ENCODE measurements at regions of chr12 and their contacts with region 1.

Region 1: DNA sequence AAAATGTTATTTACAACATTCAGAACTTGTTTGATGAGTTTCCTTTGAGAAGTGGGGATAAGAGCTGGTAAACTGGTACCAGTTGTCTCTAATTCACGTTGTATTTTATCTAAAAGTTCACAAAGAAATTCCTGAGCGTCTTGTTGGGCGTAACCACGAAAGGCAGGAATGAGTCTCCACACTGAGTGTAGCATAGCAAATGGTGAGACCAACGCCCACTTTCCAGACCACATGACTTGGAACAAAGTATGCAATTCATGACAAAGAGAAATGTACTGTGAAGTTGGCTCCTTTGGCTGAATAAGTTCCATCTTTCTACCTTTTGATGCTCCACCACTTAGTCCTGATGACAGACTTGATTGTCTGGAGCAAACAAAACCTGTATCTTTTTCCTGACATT is 18.4 kb downstream of the USP44 start:
- DNase-seq: no peak
- ATAC-seq: no peak
- H3K4me3 ChIP-seq: no peak overlapping the region
- H3K4me3 Mint-ChIP-seq: no peak overlapping the region
- H3K27ac ChIP-seq: no peak overlapping the region
- H3K27ac Mint-ChIP-seq: no peak overlapping the region
- H3K4me1 ChIP-seq: no peaks in the 10 kb centered on the region
- H3K4me1 Mint-ChIP-seq: peaks cover 3 to 40% (median 9%) of the 10 kb centered on the region in 7 donors
- H3K27me3 ChIP-seq: no peaks in the 10 kb centered on the region
- H3K27me3 Mint-ChIP-seq: no peaks in the 10 kb centered on the region

Region 2: DNA sequence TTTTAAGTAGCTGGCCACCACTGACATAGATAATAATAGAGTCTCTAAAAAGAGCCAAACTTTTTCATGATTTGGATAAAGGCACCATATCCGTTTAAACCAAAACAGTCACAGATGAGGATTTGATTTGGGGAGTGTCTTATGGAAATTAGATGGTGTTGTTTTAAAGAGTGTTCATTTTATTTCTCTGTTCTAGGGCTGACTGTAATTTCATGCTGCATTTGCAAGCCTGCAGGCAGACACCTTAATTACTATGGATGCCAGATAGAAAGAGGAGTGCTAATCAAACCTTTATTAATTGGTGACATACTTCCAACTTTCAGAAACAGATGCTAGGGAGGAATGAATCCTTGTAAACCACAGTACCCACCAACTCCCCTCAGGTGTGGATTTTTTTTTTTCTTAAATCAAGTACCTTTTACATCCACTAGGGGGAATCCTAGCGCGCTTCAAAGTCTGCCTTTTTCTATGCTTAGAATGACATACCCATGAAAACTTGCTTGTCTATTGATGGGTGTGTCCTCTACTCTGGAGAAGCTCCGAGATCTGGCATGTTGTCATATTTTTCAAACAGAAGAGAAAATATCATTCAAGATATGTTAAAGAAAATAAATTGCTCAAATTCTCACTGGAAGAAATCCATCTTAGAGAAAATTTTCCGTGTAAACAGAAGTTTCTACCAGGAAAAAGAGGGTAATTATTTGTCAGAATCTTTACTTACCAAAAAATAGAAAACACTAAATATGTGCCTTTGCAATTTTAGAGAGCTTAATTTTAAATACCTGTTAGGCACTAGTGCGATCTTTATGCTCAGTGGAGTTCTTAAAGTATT is 1398.7 kb before region 1 on chr12:
- CTCF ChIA-PET with region 1: no interaction called
- POLR2A ChIA-PET with region 1: no interaction called
- intact Hi-C with region 1: loop called in 1 of 2 experiments (anchors 5 kb)
- DNase-seq: peak in 7 of 9 donors; percentile 34 to 65 (median 59)
- ATAC-seq: peak; percentile 97
- H3K4me3 ChIP-seq: no peak overlapping the region
- H3K4me3 Mint-ChIP-seq: no peak overlapping the region
- H3K27ac ChIP-seq: no peak overlapping the region
- H3K27ac Mint-ChIP-seq: peak overlapping the region in 2 of 9 donors; percentile 16 to 28
- H3K4me1 ChIP-seq: no peaks in the 10 kb centered on the region
- H3K4me1 Mint-ChIP-seq: peaks cover 0 to 10% (median 4%) of the 10 kb centered on the region in 7 donors
- H3K27me3 ChIP-seq: no peaks in the 10 kb centered on the region
- H3K27me3 Mint-ChIP-seq: peaks cover 0 to 11% (median 0%) of the 10 kb centered on the region in 5 donors

Region 3: DNA sequence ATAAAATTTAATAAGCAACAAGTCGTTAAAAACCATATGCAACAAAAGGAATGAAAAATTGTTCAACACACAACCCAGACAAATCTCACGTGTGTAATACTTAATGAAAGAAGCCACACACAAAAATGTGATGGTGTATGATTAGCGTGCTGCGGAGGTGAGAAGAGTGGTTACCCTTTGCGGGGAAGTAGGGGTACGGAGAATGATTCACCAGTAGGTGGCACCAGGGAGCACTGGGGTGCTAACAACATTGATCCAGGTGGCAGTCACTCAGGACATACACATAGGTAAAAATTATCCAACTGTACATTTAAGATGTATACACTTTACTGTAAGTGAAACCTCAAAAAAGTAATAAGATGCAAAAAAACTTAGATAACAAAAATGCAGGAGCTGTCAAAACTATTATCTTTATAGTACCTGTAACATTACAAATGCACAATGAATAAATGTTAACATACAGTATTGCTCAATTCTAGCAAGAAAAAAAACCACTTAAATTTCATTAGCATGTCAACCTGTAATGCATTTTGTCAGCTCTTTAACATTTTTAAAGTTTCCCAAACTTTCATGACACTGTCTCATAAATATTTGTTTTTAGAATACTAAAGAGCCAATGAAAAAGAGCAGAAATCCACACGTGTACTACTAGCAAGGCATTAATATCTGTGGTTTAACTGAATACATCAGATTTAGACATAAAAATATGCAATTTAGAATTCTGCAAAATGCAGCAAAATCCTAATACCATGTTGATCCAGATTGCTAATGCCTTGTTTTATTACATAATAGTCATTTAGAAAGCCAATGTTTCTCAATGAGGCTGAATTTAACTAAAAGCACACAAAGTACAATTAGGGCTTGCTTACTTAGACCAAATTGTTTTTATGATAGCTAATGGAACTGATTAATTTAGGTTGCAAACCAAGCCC is 929.2 kb before region 1 on chr12:
- CTCF ChIA-PET with region 1: interaction called, 3 read pairs
- POLR2A ChIA-PET with region 1: no interaction called
- intact Hi-C with region 1: loop called (anchors 1 to 5 kb)
- DNase-seq: peak in 7 of 9 donors; percentile 16 to 58 (median 37)
- ATAC-seq: peak; percentile 80
- H3K4me3 ChIP-seq: no peak overlapping the region
- H3K4me3 Mint-ChIP-seq: no peak overlapping the region
- H3K27ac ChIP-seq: no peak overlapping the region
- H3K27ac Mint-ChIP-seq: no peak overlapping the region
- H3K4me1 ChIP-seq: no peaks in the 10 kb centered on the region
- H3K4me1 Mint-ChIP-seq: peaks cover 0 to 7% (median 0%) of the 10 kb centered on the region in 7 donors
- H3K27me3 ChIP-seq: no peaks in the 10 kb centered on the region
- H3K27me3 Mint-ChIP-seq: peaks cover 3 to 41% (median 8%) of the 10 kb centered on the region in 5 donors

Region 4: DNA sequence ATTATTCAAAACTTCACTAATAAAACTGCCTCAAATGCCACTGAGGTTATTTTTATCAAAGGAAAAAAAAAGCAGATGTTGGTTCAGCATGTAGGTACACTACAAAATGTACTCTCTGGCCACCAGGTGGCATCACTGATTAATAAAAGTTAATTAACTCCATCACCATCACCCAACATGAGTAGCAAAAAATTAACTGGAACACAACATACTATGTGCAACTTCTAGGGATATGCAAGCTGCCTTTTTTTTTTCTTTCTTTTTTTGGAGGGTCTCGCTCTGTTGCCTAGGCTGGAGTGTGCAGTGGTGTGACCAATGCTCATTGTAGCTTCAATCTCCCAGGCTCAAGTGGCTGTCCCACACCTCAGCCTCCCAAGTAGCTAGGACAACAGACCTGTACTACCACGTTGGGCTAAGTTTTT is 415.7 kb before region 1 on chr12:
- CTCF ChIA-PET with region 1: interaction called, 68 read pairs
- POLR2A ChIA-PET with region 1: no interaction called
- intact Hi-C with region 1: loop called (anchors 1 kb)
- DNase-seq: peak; percentile 16 to 77 (median 67)
- ATAC-seq: peak; percentile 87
- H3K4me3 ChIP-seq: no peak overlapping the region
- H3K4me3 Mint-ChIP-seq: no peak overlapping the region
- H3K27ac ChIP-seq: no peak overlapping the region
- H3K27ac Mint-ChIP-seq: no peak overlapping the region
- H3K4me1 ChIP-seq: no peaks in the 10 kb centered on the region
- H3K4me1 Mint-ChIP-seq: peaks cover 0 to 7% (median 0%) of the 10 kb centered on the region in 7 donors
- H3K27me3 ChIP-seq: no peaks in the 10 kb centered on the region
- H3K27me3 Mint-ChIP-seq: no peaks in the 10 kb centered on the region

Region 5: GRCh38 chr12:95262808-95263207 is 270.0 kb before region 1 on chr12:
- CTCF ChIA-PET with region 1: no interaction called
- POLR2A ChIA-PET with region 1: no interaction called
- intact Hi-C with region 1: no loop called
- DNase-seq: no peak
- ATAC-seq: no peak
- H3K4me3 ChIP-seq: no peak overlapping the region
- H3K4me3 Mint-ChIP-seq: no peak overlapping the region
- H3K27ac ChIP-seq: no peak overlapping the region
- H3K27ac Mint-ChIP-seq: no peak overlapping the region
- H3K4me1 ChIP-seq: no peaks in the 10 kb centered on the region
- H3K4me1 Mint-ChIP-seq: peaks cover 0 to 6% (median 0%) of the 10 kb centered on the region in 7 donors
- H3K27me3 ChIP-seq: no peaks in the 10 kb centered on the region
- H3K27me3 Mint-ChIP-seq: no peaks in the 10 kb centered on the region

Region 6: GRCh38 chr12:95277139-95277538 is 255.7 kb before region 1 on chr12:
- CTCF ChIA-PET with region 1: no interaction called
- POLR2A ChIA-PET with region 1: no interaction called
- intact Hi-C with region 1: loop called in 1 of 2 experiments (anchors 10 kb)
- DNase-seq: no peak
- ATAC-seq: no peak
- H3K4me3 ChIP-seq: no peak overlapping the region
- H3K4me3 Mint-ChIP-seq: no peak overlapping the region
- H3K27ac ChIP-seq: no peak overlapping the region
- H3K27ac Mint-ChIP-seq: peak overlapping the region in 1 of 9 donors; percentile 4
- H3K4me1 ChIP-seq: no peaks in the 10 kb centered on the region
- H3K4me1 Mint-ChIP-seq: peaks cover 0 to 9% (median 0%) of the 10 kb centered on the region in 7 donors
- H3K27me3 ChIP-seq: no peaks in the 10 kb centered on the region
- H3K27me3 Mint-ChIP-seq: no peaks in the 10 kb centered on the region

Region 7: GRCh38 chr12:95336390-95337067 is 196.3 kb before region 1 on chr12:
- CTCF ChIA-PET with region 1: interaction called, 3 read pairs
- POLR2A ChIA-PET with region 1: no interaction called
- intact Hi-C with region 1: loop called (anchors 1 to 10 kb)
- DNase-seq: no peak
- ATAC-seq: no peak
- H3K4me3 ChIP-seq: no peak overlapping the region
- H3K4me3 Mint-ChIP-seq: no peak overlapping the region
- H3K27ac ChIP-seq: no peak overlapping the region
- H3K27ac Mint-ChIP-seq: peak overlapping the region in 3 of 9 donors; percentile 31 to 52 (median 48)
- H3K4me1 ChIP-seq: no peaks in the 10 kb centered on the region
- H3K4me1 Mint-ChIP-seq: peaks cover 0 to 9% (median 5%) of the 10 kb centered on the region in 7 donors
- H3K27me3 ChIP-seq: no peaks in the 10 kb centered on the region
- H3K27me3 Mint-ChIP-seq: peaks cover 0 to 2% (median 0%) of the 10 kb centered on the region in 5 donors

Region 8: GRCh38 chr12:95548539-95549391 is 15.9 kb after region 1 on chr12:
- CTCF ChIA-PET with region 1: interaction called, 9 read pairs
- POLR2A ChIA-PET with region 1: no interaction called
- intact Hi-C with region 1: loop called in 1 of 2 experiments (anchors 1 kb)
- DNase-seq: peak; percentile 66 to 81 (median 77)
- ATAC-seq: peak; percentile 94
- H3K4me3 ChIP-seq: peak overlapping the region; percentile 75
- H3K4me3 Mint-ChIP-seq: peak overlapping the region; percentile 89 to 96 (median 94)
- H3K27ac ChIP-seq: peak overlapping the region; percentile 96
- H3K27ac Mint-ChIP-seq: peak overlapping the region; percentile 70 to 98 (median 94)
- H3K4me1 ChIP-seq: peaks cover 6 to 23% of the 10 kb centered on the region in 2 donors
- H3K4me1 Mint-ChIP-seq: peaks cover 36 to 73% (median 61%) of the 10 kb centered on the region in 7 donors
- H3K27me3 ChIP-seq: no peaks in the 10 kb centered on the region
- H3K27me3 Mint-ChIP-seq: peaks cover 0 to 22% (median 7%) of the 10 kb centered on the region in 5 donors

Measured in naive thymus-derived CD4-positive, alpha-beta T cell (primary cell).